K562 (cell line): ENCODE measurements at regions of chr15 and their contacts with region 1.

Region 1: GRCh38 chr15:80072285-80072994 is 13.0 kb downstream of the ZFAND6 start:
- DNase-seq: peak; percentile 56 to 88 (median 68)
- ATAC-seq: peak; percentile 89
- H3K4me3 ChIP-seq: peak overlapping the region; percentile 42
- H3K27ac ChIP-seq: peak overlapping the region; percentile 55; the same call in 2 of the 3 replicates
- H3K4me1 ChIP-seq: peaks cover 9 to 15% of the 10 kb centered on the region in 2 experiments; a peak in 4 of 5 replicates
- H3K27me3 ChIP-seq: no peaks in the 10 kb centered on the region
- CTCF ChIP-seq: no peak
- EP300 ChIP-seq: no peak
- POLR2A ChIP-seq: 0 out of 2 replicates have a peak, but pooled peaks have one; percentile 37
- RAD21 ChIP-seq: no peak; a peak in 1 of 4 replicates

Region 2: DNA sequence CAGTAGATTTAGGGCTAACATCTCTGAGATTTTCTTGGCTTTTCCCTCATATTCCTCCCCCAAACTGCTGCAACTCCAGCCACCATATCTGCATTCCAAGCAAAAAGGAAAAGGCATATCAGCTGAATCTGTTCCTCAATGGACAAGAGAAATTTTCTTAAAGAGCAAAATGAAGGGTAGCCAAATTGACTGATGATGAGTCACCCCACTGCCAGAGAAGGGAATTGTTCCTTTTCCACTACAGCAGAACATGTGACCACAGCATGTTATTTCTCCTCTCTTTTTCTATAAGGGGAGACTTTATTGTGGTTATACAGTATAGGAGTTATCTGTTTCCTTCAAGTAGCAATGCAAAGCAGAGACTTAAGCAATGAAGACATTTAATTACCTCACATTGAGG is 348.1 kb before region 1 on chr15:
- CTCF ChIA-PET with region 1: no interaction called
- POLR2A ChIA-PET with region 1: no interaction called
- in situ Hi-C with region 1: no loop called
- intact Hi-C with region 1: no loop called
- DNase-seq: no peak
- ATAC-seq: no peak
- H3K4me3 ChIP-seq: no peak overlapping the region
- H3K27ac ChIP-seq: no peak overlapping the region
- H3K4me1 ChIP-seq: no peaks in the 10 kb centered on the region
- H3K27me3 ChIP-seq: no peaks in the 10 kb centered on the region
- CTCF ChIP-seq: no peak
- EP300 ChIP-seq: no peak
- POLR2A ChIP-seq: no peak
- RAD21 ChIP-seq: no peak

Region 3: DNA sequence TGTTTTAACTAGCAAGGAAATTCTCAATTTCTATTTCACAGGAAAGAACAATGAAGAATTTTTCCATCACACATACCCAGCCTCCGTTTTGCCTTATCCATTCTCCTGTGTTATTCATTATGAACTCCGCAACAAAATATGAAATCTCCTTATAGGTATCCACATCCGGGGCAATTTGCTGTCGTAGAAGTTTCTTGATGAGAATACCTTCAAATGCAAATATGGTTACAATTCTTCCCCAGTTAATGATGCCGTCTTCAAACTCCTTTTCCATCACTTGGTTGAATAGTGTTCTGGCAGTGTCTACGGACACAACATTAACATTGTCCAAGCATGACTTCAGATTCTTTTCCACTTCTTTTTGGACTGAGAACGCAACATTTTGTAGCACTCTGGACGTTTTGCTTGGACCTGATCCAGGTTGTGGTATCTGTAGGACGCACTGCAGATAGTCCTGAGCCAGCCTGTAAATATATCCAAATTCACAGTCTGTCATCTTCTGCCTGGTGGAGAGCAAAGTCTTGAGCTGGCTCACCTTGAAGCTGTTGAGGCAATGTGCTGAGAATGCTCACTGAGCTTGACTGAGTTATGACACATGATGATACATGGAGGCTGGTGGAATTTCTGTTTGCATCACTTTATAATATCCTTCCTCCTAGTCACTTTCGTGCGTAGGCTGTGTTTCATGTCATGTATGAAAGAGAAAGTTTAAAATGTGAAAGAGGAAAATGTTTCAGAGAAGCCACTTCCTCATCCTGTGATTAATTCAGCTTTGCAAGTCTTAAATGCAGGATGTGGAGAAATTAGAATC is 101.6 kb before region 1 on chr15 and contains the start of gene BCL2A1:
- CTCF ChIA-PET with region 1: no interaction called
- POLR2A ChIA-PET with region 1: no interaction called
- in situ Hi-C with region 1: no loop called
- intact Hi-C with region 1: no loop called
- DNase-seq: peak in 1 of 4 experiments; percentile 56
- ATAC-seq: peak; percentile 66
- H3K4me3 ChIP-seq: no peak within 1 kb of the TSS
- H3K27ac ChIP-seq: peak within 1 kb of the TSS; percentile 2; the same call in 1 of the 3 replicates
- H3K4me1 ChIP-seq: peaks cover 3 to 29% of the 10 kb centered on the region in 2 experiments; a peak in 4 of 5 replicates
- H3K27me3 ChIP-seq: no peaks in the 10 kb centered on the region
- CTCF ChIP-seq: no peak
- EP300 ChIP-seq: no peak
- POLR2A ChIP-seq: no peak
- RAD21 ChIP-seq: no peak
- polyA plus RNA-seq, gene BCL2A1: 0.15 to 0.25 TPM

Region 4: DNA sequence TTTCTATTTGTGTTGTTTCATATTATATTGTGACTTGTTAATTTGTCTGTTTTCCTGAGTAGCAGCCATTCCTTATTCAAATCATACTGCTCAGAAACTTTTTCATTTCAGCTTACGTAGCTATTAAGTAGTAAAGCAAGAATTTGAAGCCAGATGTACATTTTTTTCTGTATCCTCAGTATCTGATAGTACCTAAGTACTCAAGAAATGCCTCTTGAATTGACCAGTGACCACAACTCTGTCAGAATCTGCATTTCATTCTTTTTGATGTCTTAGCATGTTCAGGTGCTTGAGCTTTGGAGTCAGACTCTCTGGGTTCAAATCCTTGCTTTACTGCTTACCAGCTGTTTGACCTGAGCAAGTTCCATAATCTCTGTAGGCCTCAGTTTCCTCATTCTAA is 17.6 kb after region 1 on chr15:
- CTCF ChIA-PET with region 1: no interaction called
- POLR2A ChIA-PET with region 1: interaction called, 10 read pairs
- in situ Hi-C with region 1: no loop called
- intact Hi-C with region 1: no loop called
- DNase-seq: no peak
- ATAC-seq: no peak
- H3K4me3 ChIP-seq: no peak overlapping the region
- H3K27ac ChIP-seq: no peak overlapping the region
- H3K4me1 ChIP-seq: peaks cover 0 to 13% of the 10 kb centered on the region in 2 experiments; a peak in 4 of 5 replicates
- H3K27me3 ChIP-seq: no peaks in the 10 kb centered on the region
- CTCF ChIP-seq: no peak
- EP300 ChIP-seq: no peak
- POLR2A ChIP-seq: no peak
- RAD21 ChIP-seq: no peak

Region 5: GRCh38 chr15:80159811-80160569 is 87.5 kb after region 1 on chr15:
- CTCF ChIA-PET with region 1: no interaction called
- POLR2A ChIA-PET with region 1: no interaction called
- in situ Hi-C with region 1: loop called (anchors 5 kb)
- intact Hi-C with region 1: no loop called
- DNase-seq: peak in 1 of 4 experiments; percentile 11
- ATAC-seq: no peak; the same call in 2 of the 3 replicates
- H3K4me3 ChIP-seq: no peak overlapping the region
- H3K27ac ChIP-seq: peak overlapping the region; percentile 74
- H3K4me1 ChIP-seq: peaks cover 31 to 38% of the 10 kb centered on the region in 2 experiments
- H3K27me3 ChIP-seq: no peaks in the 10 kb centered on the region
- CTCF ChIP-seq: no peak
- EP300 ChIP-seq: no peak
- POLR2A ChIP-seq: no peak
- RAD21 ChIP-seq: no peak